Gastrocnemius medialis (tissue), 4 donors: ENCODE measurements at regions of chr15 and their contacts with region 1.

Region 1: GRCh38 chr15:25368850-25369249 is 70.0 kb downstream of the UBE3A start:
- DNase-seq: no peak
- ATAC-seq: no peak
- H3K4me3 ChIP-seq: no peak overlapping the region
- H3K27ac ChIP-seq: no peak overlapping the region
- H3K4me1 ChIP-seq: peaks cover 4 to 12% of the 10 kb centered on the region in 2 donors
- H3K27me3 ChIP-seq: no peaks in the 10 kb centered on the region
- CTCF ChIP-seq: no peak
- POLR2A ChIP-seq: no peak

Region 2: GRCh38 chr15:25333049-25333448 is 35.8 kb before region 1 on chr15:
- in situ Hi-C with region 1: no loop called
- intact Hi-C with region 1: no loop called
- DNase-seq: no peak
- ATAC-seq: no peak
- H3K4me3 ChIP-seq: no peak overlapping the region
- H3K27ac ChIP-seq: no peak overlapping the region
- H3K4me1 ChIP-seq: peaks cover 10 to 19% of the 10 kb centered on the region in 2 donors
- H3K27me3 ChIP-seq: no peaks in the 10 kb centered on the region
- CTCF ChIP-seq: no peak
- POLR2A ChIP-seq: no peak

Region 3: DNA sequence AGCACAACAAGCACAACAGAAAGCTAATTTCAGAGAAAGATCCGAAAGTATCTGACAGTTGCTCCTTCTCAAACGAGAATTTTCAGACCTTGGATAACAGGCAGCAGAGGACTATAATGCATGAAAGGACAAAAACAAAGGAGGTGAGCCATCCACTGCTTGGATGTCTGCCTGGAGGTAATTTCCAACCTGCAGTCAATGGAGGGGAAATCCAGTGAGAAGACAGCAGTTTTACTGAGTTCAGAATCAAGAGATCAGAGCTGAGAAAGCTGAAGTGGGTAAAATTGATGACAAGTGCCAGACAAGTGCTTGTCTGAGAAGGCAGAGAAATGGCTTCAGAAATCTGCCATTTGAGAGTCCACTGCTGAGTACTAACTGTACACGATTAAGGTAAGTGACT is 47.8 kb after region 1 on chr15:
- in situ Hi-C with region 1: loop called in 1 of 4 experiments (anchors 10 kb)
- intact Hi-C with region 1: no loop called
- DNase-seq: no peak
- ATAC-seq: peak in 1 of 2 donors; percentile 24
- H3K4me3 ChIP-seq: no peak overlapping the region
- H3K27ac ChIP-seq: peak overlapping the region in 1 of 4 donors; percentile 10
- H3K4me1 ChIP-seq: peaks cover 36 to 43% of the 10 kb centered on the region in 2 donors
- H3K27me3 ChIP-seq: no peaks in the 10 kb centered on the region
- CTCF ChIP-seq: no peak
- POLR2A ChIP-seq: no peak